ENCODE measurements at regions of chr7 and their contacts with region 1.

Region 1: GRCh38 chr7:22660732-22661131 is 66.3 kb upstream of the IL6 start:
- DNase-seq: no peak
- ATAC-seq: no peak
- H3K4me3 Mint-ChIP-seq: peak overlapping the region; percentile 80
- H3K27ac Mint-ChIP-seq: peak overlapping the region; percentile 95
- H3K4me1 Mint-ChIP-seq: peaks cover 88% of the 10 kb centered on the region
- H3K27me3 Mint-ChIP-seq: no peaks in the 10 kb centered on the region
- CTCF ChIP-seq: no peak

Region 2: DNA sequence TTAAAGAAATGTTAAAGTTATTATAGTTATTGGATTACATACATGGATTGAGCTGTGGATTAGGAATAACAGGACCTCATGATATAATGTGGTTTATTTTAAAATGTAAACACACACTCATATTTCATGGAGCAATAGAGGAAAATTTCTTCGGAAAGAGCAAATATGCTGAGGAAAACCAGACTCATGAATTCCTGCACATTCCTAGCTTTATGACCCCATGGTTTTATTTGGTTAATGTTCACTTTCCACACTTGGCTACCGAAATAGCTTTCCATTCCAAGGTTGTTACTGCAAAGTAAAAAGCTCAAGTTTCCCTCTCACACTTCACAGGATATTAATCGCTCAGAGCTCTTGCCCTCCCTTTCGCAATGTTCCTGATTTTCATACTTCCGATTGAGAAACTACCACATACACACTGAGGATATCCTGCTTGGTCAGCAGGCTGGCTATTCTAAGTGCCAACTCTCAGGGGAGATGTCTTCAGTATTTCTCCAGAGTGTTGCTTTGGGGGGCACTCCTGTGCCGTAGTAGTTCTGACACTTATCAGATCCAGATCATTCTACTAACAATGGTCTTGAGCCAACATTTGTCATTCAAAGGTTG is 83.2 kb before region 1 on chr7:
- CTCF ChIA-PET with region 1: interaction called, 6 read pairs
- POLR2A ChIA-PET with region 1: interaction called, 3 read pairs
- intact Hi-C with region 1: loop called (anchors 1 kb)
- DNase-seq: no peak
- ATAC-seq: peak; percentile 28
- H3K4me3 Mint-ChIP-seq: peak overlapping the region; percentile 57
- H3K27ac Mint-ChIP-seq: peak overlapping the region; percentile 79
- H3K4me1 Mint-ChIP-seq: peaks cover 40% of the 10 kb centered on the region
- H3K27me3 Mint-ChIP-seq: no peaks in the 10 kb centered on the region
- CTCF ChIP-seq: no peak

Region 3: DNA sequence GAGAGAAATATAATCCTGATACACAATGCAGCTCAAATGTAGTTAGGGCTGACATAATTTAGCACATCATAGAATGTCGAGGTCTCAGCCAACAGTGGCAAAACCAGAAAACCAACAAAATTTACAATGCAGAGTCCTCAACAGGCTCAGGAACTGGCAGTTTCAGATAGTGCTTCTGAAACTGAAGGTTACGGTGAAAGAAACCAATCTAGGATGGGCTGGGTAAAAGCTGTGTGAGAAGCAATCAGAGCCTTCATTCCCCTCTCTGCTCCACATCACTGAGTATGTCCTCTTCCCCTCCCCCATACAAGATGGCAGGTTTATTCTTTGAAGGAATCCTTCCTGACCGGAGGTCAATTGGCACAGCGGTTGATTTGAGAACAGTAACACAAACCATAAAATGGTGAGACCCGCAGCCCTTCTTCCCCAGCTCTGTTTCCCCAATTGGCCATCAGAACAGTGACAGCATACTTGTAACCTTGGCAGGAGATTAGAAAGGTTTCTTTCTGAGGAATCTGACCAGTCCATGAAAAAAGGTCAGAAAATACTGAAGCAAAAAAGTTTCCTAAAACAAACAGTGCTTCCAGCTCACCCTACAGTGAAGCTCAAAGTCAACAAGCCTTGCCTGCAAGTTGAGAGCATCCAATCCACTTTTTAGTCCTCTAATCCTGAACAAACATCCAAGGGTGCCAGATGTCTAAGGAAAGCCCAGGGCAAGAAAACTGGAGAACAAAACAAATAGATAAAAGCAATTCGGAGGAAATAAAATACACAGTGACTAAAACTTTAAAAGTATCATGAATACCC is 12.3 kb after region 1 on chr7:
- CTCF ChIA-PET with region 1: interaction called, 12 read pairs
- POLR2A ChIA-PET with region 1: interaction called, 75 read pairs
- intact Hi-C with region 1: loop called (anchors 1 kb)
- DNase-seq: no peak
- ATAC-seq: peak; percentile 57
- H3K4me3 Mint-ChIP-seq: peak overlapping the region; percentile 39
- H3K27ac Mint-ChIP-seq: peak overlapping the region; percentile 89
- H3K4me1 Mint-ChIP-seq: peaks cover 93% of the 10 kb centered on the region
- H3K27me3 Mint-ChIP-seq: no peaks in the 10 kb centered on the region
- CTCF ChIP-seq: no peak

Region 4: GRCh38 chr7:22718200-22718711 is 57.5 kb after region 1 on chr7:
- CTCF ChIA-PET with region 1: interaction called, 110 read pairs
- POLR2A ChIA-PET with region 1: interaction called, 215 read pairs
- intact Hi-C with region 1: loop called (anchors 1 kb)
- DNase-seq: no peak
- ATAC-seq: no peak
- H3K4me3 Mint-ChIP-seq: no peak overlapping the region
- H3K27ac Mint-ChIP-seq: no peak overlapping the region
- H3K4me1 Mint-ChIP-seq: peaks cover 91% of the 10 kb centered on the region
- H3K27me3 Mint-ChIP-seq: no peaks in the 10 kb centered on the region
- CTCF ChIP-seq: no peak

Region 5: GRCh38 chr7:22782616-22783232 is 122.0 kb after region 1 on chr7:
- CTCF ChIA-PET with region 1: interaction called, 5 read pairs
- POLR2A ChIA-PET with region 1: interaction called, 3 read pairs
- intact Hi-C with region 1: loop called (anchors 1 kb)
- DNase-seq: peak; percentile 65
- ATAC-seq: peak; percentile 99
- H3K4me3 Mint-ChIP-seq: no peak overlapping the region
- H3K27ac Mint-ChIP-seq: no peak overlapping the region
- H3K4me1 Mint-ChIP-seq: no peaks in the 10 kb centered on the region
- H3K27me3 Mint-ChIP-seq: no peaks in the 10 kb centered on the region
- CTCF ChIP-seq: no peak

Region 6: DNA sequence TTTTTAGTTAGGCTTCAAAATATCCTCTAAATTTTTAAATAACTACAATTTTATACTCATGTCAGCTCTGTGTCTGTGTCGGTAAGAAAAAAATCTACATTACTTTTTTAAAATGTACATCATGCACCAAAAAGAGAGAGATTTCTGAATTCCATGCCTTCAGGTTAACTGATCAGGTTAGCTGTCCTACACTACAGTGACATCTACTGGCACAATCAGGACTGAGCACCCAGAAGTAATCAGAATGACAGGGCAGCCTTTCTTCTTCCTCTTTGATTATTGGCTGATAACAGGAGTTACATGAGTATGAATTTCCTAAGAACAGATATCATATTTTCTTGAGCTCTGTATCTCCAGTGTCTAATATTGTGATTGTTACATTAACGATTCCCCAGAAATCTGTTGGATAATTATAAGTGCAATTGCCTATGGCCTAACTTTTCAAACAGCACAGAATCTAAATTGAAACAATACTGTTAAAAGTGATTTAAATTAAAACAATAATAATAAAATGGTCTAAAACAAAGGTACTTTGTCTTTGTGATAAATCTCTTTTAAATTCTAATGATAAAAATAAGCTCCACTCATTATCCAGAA is 394.9 kb after region 1 on chr7:
- CTCF ChIA-PET with region 1: interaction called, 4 read pairs
- POLR2A ChIA-PET with region 1: no interaction called
- intact Hi-C with region 1: loop called (anchors 2 kb)
- DNase-seq: no peak
- ATAC-seq: peak; percentile 99
- H3K4me3 Mint-ChIP-seq: no peak overlapping the region
- H3K27ac Mint-ChIP-seq: no peak overlapping the region
- H3K4me1 Mint-ChIP-seq: no peaks in the 10 kb centered on the region
- H3K27me3 Mint-ChIP-seq: no peaks in the 10 kb centered on the region
- CTCF ChIP-seq: peak; percentile 80

Measured in activated B cell treated with CpG ODN at 0.5 μM for 24 hours (primary cell).